ENCODE measurements at regions of chr11 and their contacts with region 1.

Region 1: GRCh38 chr11:9137293-9138132 is 46.1 kb upstream of the SCUBE2 start:
- DNase-seq: peak; percentile 94
- ATAC-seq: peak; percentile 99
- H3K4me3 Mint-ChIP-seq: no peak overlapping the region
- H3K27ac Mint-ChIP-seq: peak overlapping the region; percentile 73
- H3K4me1 Mint-ChIP-seq: peaks cover 14% of the 10 kb centered on the region
- H3K27me3 Mint-ChIP-seq: no peaks in the 10 kb centered on the region
- CTCF ChIP-seq: peak; percentile 84

Region 2: DNA sequence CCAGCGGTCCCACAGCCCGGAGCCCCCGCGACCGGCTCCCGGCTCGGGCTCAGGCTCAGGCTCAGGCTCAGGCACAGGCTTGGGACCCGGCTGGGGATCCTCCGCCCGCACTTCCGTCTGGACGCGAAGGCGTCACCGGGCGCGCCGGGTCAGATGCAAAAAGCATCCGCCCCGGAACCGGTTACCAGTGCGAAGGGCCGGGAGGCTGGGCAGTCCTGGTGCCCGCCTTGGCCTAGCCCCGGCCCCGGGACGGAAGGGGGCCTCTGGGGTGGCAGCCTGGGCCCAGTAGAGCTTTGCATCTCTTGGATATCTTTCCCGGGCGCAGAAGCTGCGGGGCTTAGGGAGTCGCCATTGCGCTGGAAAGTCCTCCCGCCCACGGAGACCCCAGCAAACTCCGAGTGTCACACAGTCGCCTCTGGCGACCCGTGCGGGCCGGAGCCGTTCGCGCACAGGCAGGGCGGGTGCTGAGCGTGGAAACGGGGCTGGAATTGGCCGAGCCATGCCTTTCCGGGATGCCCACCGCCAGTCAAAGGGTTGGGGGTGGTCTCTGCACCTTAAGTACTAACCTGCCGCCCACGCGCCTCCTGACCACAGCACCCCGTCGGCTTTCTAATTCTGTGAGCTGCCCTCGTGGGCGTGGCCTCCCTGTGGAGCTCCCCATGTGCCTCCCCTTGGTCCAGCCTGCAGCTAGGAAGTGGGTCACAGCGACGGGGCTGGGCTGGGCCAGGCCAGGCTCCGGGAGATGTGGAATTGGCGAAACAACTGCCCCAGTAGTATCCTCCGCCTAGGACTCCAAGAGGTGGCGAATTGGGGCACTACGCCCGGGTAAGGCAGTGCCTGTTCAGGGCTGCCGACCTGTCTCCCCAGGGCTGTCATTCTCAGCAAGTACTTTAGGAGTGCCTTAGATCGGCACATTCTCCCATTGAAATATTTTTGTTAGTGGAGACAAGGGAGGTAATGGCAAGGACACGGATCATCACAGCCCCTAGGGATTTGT is 172.9 kb before region 1 on chr11 and contains the start of gene TMEM9B:
- CTCF ChIA-PET with region 1: interaction called, 22 read pairs
- POLR2A ChIA-PET with region 1: no interaction called
- DNase-seq: peak; percentile 86
- ATAC-seq: peak; percentile 80
- H3K4me3 Mint-ChIP-seq: peak within 1 kb of the TSS; percentile 94
- H3K27ac Mint-ChIP-seq: peak within 1 kb of the TSS; percentile 89
- H3K4me1 Mint-ChIP-seq: peaks cover 19% of the 10 kb centered on the region
- H3K27me3 Mint-ChIP-seq: no peaks in the 10 kb centered on the region
- CTCF ChIP-seq: no peak
- total RNA-seq, gene TMEM9B: 8.7 to 10.2 TPM (median 8.9 TPM) in 3 replicates

Region 3: DNA sequence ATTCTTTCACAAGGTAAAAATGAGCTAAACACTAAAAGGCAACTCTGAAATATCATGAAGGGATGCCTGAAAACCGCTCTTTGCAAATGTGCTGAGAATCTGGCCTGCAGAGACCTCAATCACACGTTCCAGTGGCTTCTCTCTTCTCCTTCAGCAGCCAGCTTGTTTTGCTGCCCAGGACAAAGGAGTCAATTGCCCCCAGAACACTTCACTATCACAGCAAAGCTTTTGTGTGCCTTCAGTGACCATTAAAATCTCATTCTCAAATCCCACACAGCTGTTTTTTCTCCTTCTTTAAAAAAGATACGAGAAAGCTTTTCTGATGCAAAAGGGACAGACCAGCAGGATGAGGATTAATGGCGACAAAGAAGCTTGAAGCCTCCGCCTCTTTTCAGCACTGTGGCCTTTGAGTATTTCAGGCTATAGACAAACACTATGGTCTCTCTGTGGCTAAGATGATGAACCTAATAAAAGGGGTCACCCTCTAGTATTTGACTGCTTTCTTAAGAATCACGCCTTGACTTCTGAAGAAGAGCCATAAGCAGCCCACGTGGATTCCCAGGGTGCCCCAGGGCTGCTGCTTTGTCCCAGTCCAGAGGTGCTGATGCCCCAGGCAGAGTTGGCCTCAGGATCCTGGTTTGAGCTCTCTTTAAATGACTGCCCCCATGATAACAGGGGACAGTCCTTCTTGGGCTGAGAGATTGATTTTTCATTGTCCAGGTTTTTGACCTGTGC is 100.3 kb before region 1 on chr11:
- CTCF ChIA-PET with region 1: interaction called, 10 read pairs
- POLR2A ChIA-PET with region 1: no interaction called
- DNase-seq: no peak
- ATAC-seq: peak; percentile 26
- H3K4me3 Mint-ChIP-seq: no peak overlapping the region
- H3K27ac Mint-ChIP-seq: no peak overlapping the region
- H3K4me1 Mint-ChIP-seq: peaks cover 18% of the 10 kb centered on the region
- H3K27me3 Mint-ChIP-seq: no peaks in the 10 kb centered on the region
- CTCF ChIP-seq: no peak

Region 4: GRCh38 chr11:9078113-9079086 is 59.1 kb before region 1 on chr11:
- CTCF ChIA-PET with region 1: interaction called, 25 read pairs
- POLR2A ChIA-PET with region 1: no interaction called
- DNase-seq: no peak
- ATAC-seq: peak; percentile 87
- H3K4me3 Mint-ChIP-seq: no peak overlapping the region
- H3K27ac Mint-ChIP-seq: no peak overlapping the region
- H3K4me1 Mint-ChIP-seq: peaks cover 8% of the 10 kb centered on the region
- H3K27me3 Mint-ChIP-seq: no peaks in the 10 kb centered on the region; the same call in 1 of the 2 replicates
- CTCF ChIP-seq: no peak

Region 5: DNA sequence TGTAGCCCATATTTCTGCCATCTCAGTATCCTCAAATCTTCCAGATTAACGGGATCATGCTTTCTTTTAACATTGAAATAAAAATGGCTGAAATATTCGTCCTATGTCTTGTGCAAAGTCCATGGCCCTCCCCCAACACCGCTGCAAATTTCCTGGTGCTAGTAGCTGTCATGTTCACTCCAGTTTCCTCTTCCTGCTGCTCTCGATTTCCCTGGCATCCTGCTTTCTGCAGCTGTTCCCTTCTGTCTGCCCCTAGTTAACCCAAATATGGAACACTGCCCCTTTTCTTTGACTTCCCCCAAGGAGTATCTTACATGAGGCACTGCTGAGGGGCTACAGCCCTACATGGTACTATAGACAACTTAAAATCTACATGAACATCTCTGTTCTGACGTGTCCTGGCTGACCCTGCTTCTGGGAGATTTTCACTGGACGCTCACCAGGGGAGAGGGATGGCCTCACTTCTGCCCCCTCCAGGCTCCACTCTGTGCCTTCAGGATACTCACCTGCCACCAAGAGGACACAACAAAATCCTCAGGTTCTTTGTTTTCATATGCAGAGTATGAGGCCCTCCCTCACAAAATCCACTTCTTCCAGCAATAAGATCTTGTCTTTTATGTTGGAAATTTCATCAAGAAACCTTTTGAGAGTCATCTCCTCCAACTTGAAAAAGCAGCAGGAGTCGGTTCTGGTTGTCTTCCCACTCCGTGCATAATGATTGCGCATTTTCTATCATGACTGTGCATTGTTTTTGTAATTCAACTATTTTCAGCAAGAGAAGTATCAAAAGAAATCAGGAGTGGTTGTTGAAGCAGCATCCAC is 16.6 kb before region 1 on chr11:
- CTCF ChIA-PET with region 1: interaction called, 20 read pairs
- POLR2A ChIA-PET with region 1: no interaction called
- DNase-seq: peak; percentile 72
- ATAC-seq: peak; percentile 97
- H3K4me3 Mint-ChIP-seq: peak overlapping the region; percentile 41
- H3K27ac Mint-ChIP-seq: peak overlapping the region; percentile 88
- H3K4me1 Mint-ChIP-seq: peaks cover 34% of the 10 kb centered on the region
- H3K27me3 Mint-ChIP-seq: no peaks in the 10 kb centered on the region
- CTCF ChIP-seq: peak; percentile 54; the same call in 1 of the 2 replicates

Region 6: GRCh38 chr11:9193321-9193720 is 55.8 kb after region 1 on chr11:
- CTCF ChIA-PET with region 1: no interaction called
- POLR2A ChIA-PET with region 1: no interaction called
- DNase-seq: no peak
- ATAC-seq: no peak
- H3K4me3 Mint-ChIP-seq: no peak overlapping the region
- H3K27ac Mint-ChIP-seq: no peak overlapping the region; the same call in 1 of the 2 replicates
- H3K4me1 Mint-ChIP-seq: no peaks in the 10 kb centered on the region
- H3K27me3 Mint-ChIP-seq: no peaks in the 10 kb centered on the region; the same call in 1 of the 2 replicates
- CTCF ChIP-seq: no peak

Measured in WTC11 (cell line).